GM13977 (cell line): ENCODE measurements at regions of chr12 and their contacts with region 1.

Region 1: GRCh38 chr12:64796208-64796845 is 28.1 kb upstream of the TBC1D30 start:
- DNase-seq: peak; percentile 67
- CTCF ChIP-seq: peak; percentile 72

Region 2: GRCh38 chr12:64660237-64661018 is 135.9 kb before region 1 on chr12:
- in situ Hi-C with region 1: no loop called
- DNase-seq: no peak
- CTCF ChIP-seq: no peak

Region 3: DNA sequence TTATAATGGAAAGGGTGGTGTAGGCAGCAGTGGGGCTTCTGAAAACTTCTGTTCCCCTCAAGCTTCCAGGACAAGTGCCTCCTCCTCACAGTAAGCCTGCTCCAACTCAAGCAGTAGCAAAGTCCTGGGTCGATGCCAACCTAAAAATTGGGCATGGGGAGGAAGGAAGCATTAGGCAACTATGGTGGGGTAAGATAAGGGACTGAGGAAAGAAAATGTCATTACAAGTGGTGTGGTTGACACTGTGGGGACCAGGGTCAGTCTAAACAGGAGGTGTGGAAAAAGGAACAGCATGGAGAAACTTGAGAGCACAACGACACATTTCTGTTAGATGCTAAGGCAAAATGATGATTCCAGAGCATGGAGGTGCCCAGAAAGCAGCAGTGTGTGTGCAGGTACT is 289.9 kb after region 1 on chr12:
- in situ Hi-C with region 1: no loop called
- DNase-seq: no peak
- CTCF ChIP-seq: no peak

Region 4: GRCh38 chr12:65121049-65121955 is 325.0 kb after region 1 on chr12 and contains the start of gene WIF1:
- in situ Hi-C with region 1: loop called (anchors 25 kb)
- DNase-seq: peak; percentile 37
- CTCF ChIP-seq: peak; percentile 63

Region 5: DNA sequence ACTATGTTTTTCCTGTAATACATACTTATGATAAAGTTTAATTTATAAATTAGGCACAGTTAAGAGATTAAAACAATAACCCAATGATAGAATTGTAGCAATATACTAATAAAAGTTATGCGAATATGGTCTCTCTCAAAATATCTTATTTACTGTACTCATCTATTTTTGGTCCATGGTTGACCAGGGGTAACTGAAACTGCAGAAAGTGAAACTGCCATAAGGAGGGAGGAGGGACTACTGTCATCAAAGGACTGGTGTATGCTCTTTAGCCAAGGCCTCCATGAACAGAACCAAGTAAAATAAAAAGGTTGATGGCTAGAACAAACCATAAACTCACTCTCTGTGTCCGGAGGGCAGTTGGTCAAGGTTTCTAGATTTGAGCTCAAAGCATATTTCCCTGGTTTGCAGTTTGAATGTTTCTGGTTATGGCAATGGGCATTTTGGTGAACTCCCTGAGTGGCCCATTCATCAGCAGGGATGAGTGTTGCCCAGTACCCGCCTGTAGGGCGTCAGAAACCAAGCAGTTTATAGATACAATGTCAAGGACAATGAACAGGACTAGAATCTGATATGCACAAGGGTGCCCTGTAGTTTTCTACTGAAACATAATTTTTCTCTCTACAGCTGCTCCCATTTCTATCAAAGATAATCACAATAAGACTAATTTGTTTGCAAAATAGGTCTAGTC is 392.8 kb after region 1 on chr12:
- in situ Hi-C with region 1: no loop called
- DNase-seq: no peak
- CTCF ChIP-seq: no peak